Transverse colon (tissue), 4 donors: ENCODE measurements at regions of chr12 and their contacts with region 1.

Region 1: DNA sequence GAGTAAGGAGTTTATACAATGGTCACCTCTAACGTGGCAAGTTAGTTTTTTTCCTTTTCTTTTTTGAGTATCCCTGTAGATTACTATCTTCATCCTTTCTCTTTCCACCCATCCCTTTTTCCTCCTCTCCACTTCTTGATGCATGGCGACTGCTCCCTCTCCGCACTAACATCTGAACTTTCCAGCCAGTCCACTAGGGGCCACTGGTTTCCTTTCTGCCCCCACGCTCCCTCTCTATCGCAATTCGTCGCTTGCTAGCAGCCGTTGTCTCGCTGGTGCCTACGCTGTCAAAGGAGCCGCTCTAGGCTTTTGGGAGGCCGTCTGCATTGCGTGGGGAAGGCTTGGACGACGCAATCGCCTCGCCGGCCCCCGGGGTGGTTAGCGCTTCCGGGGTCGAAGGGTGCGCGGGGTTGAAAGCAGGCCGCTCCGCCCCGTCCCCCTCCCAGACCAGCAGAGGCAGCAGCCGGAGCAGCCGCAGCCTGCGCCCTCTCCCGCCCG is at the start of gene PCBP2:
- DNase-seq: peak; percentile 98
- H3K4me3 ChIP-seq: peak within 1 kb of the TSS; percentile 56 to 88 (median 68)
- H3K27ac ChIP-seq: peak within 1 kb of the TSS; percentile 91 to 97 (median 94)
- H3K4me1 ChIP-seq: peaks cover 9 to 21% (median 18%) of the 10 kb centered on the region in 4 donors
- H3K27me3 ChIP-seq: no peaks in the 10 kb centered on the region
- CTCF ChIP-seq: peak; percentile 69 to 99 (median 81)
- EP300 ChIP-seq: peak; percentile 55
- POLR2A ChIP-seq: peak; percentile 77
- total RNA-seq, gene PCBP2: 340 to 492 (median 432) TPM

Region 2: DNA sequence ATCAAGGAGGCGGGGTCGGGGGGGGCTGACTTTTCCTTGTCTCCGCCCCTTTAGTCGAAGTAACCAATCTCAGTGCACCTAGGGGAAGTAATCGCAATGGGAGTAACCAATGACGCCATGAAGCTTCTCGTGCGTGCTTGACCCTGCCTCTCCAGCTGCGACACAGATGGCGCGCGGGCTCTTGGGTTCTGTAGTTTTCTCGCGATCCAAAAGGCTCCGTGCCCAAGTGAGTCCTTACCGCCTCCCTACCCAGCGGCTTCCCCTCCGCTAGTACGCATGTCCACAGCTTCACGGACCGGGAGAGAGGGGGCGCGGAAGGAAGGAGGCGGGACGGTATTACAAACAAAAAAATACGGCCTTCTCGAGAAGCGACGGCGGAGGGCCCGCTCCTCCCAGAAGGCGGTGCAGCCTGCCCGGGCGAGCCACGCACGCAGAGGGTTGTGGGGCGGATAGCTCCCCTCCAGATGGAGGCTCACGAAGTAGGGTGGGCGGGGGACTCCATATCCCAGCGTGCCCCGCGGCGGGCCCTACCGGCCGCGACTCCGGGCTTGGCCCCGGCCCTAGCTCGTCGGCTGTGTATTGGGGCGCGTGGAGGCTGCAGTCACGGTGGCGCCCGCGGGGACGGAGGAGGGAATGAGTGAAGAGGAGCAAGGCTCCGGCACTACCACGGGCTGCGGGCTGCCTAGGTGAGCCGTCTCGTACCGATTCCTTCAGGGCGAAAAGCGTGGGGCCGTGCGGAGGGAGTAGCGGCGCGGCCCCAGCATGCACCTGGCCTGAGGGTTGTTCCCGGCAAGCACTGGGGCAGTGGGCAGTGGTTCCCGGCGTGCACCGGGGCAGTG is 49.3 kb after region 1 on chr12 and contains the start of gene TARBP2:
- in situ Hi-C with region 1: no loop called
- intact Hi-C with region 1: loop called (anchors 2 kb)
- DNase-seq: peak; percentile 99
- H3K4me3 ChIP-seq: peak within 1 kb of the TSS; percentile 53 to 78 (median 64)
- H3K27ac ChIP-seq: peak within 1 kb of the TSS; percentile 90 to 99 (median 98)
- H3K4me1 ChIP-seq: peaks cover 13 to 45% (median 31%) of the 10 kb centered on the region in 4 donors
- H3K27me3 ChIP-seq: no peaks in the 10 kb centered on the region
- CTCF ChIP-seq: peak in 1 of 5 experiments; percentile 33
- EP300 ChIP-seq: no peak
- POLR2A ChIP-seq: peak; percentile 63
- total RNA-seq, gene TARBP2: 22.4 to 37.0 (median 34.1) TPM

Region 3: DNA sequence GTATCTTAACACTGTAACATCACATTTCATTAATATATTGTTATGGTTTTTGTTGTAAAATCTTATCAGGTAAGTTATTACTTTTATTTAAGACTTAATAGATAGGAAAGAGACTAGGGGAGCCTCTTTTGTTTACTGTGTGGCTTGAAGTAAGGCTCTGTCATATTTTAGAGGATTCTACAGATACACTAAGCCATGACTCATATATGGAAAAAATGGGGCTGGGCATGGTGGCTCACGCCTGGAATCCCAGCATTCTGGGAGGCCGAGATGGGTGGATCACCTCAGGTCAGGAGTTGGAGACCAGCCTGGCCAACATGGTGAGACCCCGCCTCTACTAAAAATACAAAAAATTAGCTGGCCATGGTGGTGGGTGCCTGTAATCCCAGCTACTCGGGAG is 79.2 kb after region 1 on chr12:
- in situ Hi-C with region 1: no loop called
- intact Hi-C with region 1: no loop called
- DNase-seq: no peak
- H3K4me3 ChIP-seq: no peak overlapping the region
- H3K27ac ChIP-seq: no peak overlapping the region
- H3K4me1 ChIP-seq: no peaks in the 10 kb centered on the region
- H3K27me3 ChIP-seq: no peaks in the 10 kb centered on the region
- CTCF ChIP-seq: no peak
- EP300 ChIP-seq: no peak
- POLR2A ChIP-seq: no peak